Activated CD4-positive, alpha-beta T cell treated with anti-CD3 and anti-CD28 coated beads for 36 hours (primary cell): ENCODE measurements at regions of chr17 and their contacts with region 1.

Region 1: GRCh38 chr17:7589204-7589868 is 558 bp downstream of the SOX15 start:
- DNase-seq: peak; percentile 85
- ATAC-seq: peak; percentile 86
- H3K4me3 Mint-ChIP-seq: no peak overlapping the region
- H3K27ac Mint-ChIP-seq: no peak overlapping the region
- H3K4me1 Mint-ChIP-seq: peaks cover 16% of the 10 kb centered on the region
- H3K27me3 Mint-ChIP-seq: no peaks in the 10 kb centered on the region

Region 2: DNA sequence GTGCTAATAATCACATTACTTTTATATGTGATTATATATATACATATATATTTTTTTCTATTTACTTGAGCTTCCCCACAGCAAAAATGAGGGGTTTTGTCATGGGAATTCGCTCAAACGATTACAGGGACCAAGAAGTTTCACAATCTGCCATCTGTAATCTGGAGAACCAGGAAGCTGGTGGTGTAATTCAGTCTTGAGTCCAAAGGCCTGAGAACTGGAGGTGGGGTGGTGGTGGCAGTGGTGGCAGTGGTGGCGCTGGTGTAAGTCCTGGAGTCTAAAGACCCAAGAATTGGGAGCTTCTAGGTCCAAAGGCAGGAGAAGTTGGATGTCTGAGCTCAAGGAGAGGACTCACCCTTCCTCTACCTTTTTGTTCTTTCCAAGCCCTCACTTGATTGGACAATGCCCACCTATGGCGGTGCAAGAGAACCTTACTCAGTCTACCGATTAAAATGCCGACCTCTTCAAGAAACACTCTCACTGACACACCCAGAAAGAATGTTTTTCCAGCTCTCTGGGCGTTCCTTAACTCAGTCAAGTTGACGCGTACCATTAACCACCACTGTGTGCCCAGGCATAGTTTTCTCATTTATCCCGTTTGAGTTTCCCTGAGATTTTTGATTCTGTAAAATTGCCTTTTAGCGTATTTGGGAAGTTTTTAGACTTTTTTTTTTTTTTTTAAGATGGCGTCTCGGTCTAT is 73.3 kb before region 1 on chr17:
- CTCF ChIA-PET with region 1: interaction called, 12 read pairs
- POLR2A ChIA-PET with region 1: interaction called, 4 read pairs
- intact Hi-C with region 1: loop called in 1 of 2 experiments (anchors 2 kb)
- DNase-seq: no peak
- ATAC-seq: no peak
- H3K4me3 Mint-ChIP-seq: no peak overlapping the region
- H3K27ac Mint-ChIP-seq: no peak overlapping the region
- H3K4me1 Mint-ChIP-seq: no peaks in the 10 kb centered on the region
- H3K27me3 Mint-ChIP-seq: no peaks in the 10 kb centered on the region

Region 3: DNA sequence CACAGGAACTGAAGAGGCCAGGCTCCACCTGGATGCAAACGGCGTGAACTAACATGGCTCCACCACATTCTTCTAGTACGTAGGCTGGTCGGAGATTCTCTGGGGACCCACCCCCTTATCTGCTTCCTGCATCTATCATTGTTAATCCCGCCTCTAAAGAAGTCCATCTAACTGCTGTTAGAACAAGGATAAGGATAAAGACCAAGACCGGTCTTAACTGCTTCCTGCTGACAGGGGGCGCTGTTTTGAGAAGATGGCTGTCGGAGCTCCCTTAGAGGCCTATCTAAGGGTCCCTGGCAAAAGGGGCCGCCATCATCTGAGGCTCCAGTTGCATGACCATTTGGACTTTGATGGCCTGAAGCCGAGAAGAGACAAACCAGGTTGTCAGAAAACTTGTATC is 66.3 kb before region 1 on chr17:
- CTCF ChIA-PET with region 1: interaction called, 3 read pairs
- POLR2A ChIA-PET with region 1: no interaction called
- intact Hi-C with region 1: loop called in 1 of 2 experiments (anchors 2 kb)
- DNase-seq: peak; percentile 67
- ATAC-seq: peak; percentile 81
- H3K4me3 Mint-ChIP-seq: no peak overlapping the region
- H3K27ac Mint-ChIP-seq: no peak overlapping the region
- H3K4me1 Mint-ChIP-seq: no peaks in the 10 kb centered on the region
- H3K27me3 Mint-ChIP-seq: no peaks in the 10 kb centered on the region

Region 4: DNA sequence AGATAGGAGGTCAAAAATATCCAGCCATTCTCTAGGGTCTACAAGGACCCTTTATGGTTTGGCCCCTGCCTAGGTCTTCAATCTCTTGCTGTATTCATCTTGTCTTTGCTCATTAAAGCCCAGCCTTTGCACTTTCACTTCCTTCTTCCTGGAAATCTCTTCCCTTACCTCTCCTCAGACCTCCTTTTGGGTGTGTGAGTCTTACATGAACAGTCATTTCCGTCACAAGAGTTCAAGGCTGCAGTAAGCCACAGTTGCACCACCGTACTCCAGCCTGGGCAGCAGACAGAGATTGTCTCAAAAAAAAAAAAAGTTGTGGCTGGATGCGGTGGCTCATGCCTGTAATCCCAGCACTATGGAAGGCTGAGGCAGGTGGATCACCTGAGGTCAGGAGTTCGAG is 55.4 kb after region 1 on chr17:
- CTCF ChIA-PET with region 1: interaction called, 4 read pairs
- POLR2A ChIA-PET with region 1: interaction called, 10 read pairs
- intact Hi-C with region 1: no loop called
- DNase-seq: peak; percentile 18
- ATAC-seq: peak; percentile 79
- H3K4me3 Mint-ChIP-seq: no peak overlapping the region
- H3K27ac Mint-ChIP-seq: no peak overlapping the region
- H3K4me1 Mint-ChIP-seq: peaks cover 10% of the 10 kb centered on the region
- H3K27me3 Mint-ChIP-seq: peaks cover 12% of the 10 kb centered on the region

Region 5: GRCh38 chr17:7716901-7717755 is 127.8 kb after region 1 on chr17 and contains the start of gene DNAH2:
- CTCF ChIA-PET with region 1: no interaction called
- POLR2A ChIA-PET with region 1: no interaction called
- intact Hi-C with region 1: no loop called
- DNase-seq: peak; percentile 65
- ATAC-seq: peak; percentile 77
- H3K4me3 Mint-ChIP-seq: peak within 1 kb of the TSS; percentile 61
- H3K27ac Mint-ChIP-seq: no peak within 1 kb of the TSS
- H3K4me1 Mint-ChIP-seq: peaks cover 11% of the 10 kb centered on the region
- H3K27me3 Mint-ChIP-seq: peaks cover 59% of the 10 kb centered on the region
- total RNA-seq, gene DNAH2: not detected